A673 (cell line): ENCODE measurements at regions of chr9 and their contacts with region 1.

Region 1: GRCh38 chr9:38068866-38069629 is at the start of gene SHB:
- DNase-seq: peak; percentile 87
- H3K4me3 ChIP-seq: peak within 1 kb of the TSS; percentile 89
- H3K27ac ChIP-seq: peak within 1 kb of the TSS; percentile 91
- H3K4me1 ChIP-seq: peaks cover 20% of the 10 kb centered on the region
- H3K27me3 ChIP-seq: no peaks in the 10 kb centered on the region
- CTCF ChIP-seq: peak; percentile 50; the same call in 1 of the 2 replicates
- total RNA-seq, gene SHB: 14.7 and 20.7 TPM in 2 replicates

Region 2: DNA sequence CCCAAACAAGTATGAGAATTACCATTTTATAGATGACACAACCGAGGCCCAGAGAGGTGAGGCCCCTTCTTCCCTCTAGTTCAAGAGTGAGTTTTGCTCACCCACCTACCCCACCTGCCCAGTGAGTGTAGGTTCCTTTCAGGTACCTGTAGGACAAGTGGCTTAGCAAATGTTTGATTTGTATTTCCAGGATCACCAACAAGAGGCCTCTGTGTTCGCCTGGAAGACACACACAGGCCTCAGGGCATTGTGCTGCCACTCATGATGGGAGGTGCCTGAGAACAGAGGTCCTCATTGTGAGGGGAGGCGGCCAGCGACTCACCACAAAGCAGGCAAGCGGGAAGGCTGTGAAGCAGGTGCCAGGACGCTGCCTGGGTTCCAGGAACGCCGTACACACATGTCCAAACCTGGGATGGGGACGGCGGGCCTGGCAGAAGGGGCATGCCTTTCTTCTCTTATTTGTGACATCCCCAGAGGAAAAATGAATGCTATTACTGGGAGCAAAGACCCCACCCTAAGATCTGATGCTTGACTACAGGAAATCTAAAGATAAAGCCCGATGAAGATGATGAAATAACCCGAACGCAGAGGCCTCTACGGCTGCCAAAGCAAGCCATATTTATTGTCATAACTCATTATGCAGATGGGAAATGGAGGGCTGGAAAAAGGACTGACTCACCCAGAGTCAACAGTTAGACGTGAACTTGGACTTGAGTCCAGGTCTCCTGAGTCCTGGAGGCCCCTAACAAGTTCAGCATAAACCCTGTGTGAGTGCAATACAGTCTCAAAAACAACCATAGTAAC is 104.9 kb before region 1 on chr9:
- CTCF ChIA-PET with region 1: interaction called, 3 read pairs
- POLR2A ChIA-PET with region 1: no interaction called
- intact Hi-C with region 1: loop called (anchors 10 kb)
- DNase-seq: peak; percentile 54
- H3K4me3 ChIP-seq: no peak overlapping the region
- H3K27ac ChIP-seq: peak overlapping the region; percentile 74
- H3K4me1 ChIP-seq: peaks cover 13% of the 10 kb centered on the region
- H3K27me3 ChIP-seq: no peaks in the 10 kb centered on the region
- CTCF ChIP-seq: no peak

Region 3: GRCh38 chr9:38380872-38381534 is 312.0 kb after region 1 on chr9:
- CTCF ChIA-PET with region 1: no interaction called
- POLR2A ChIA-PET with region 1: no interaction called
- intact Hi-C with region 1: no loop called
- DNase-seq: no peak
- H3K4me3 ChIP-seq: no peak overlapping the region
- H3K27ac ChIP-seq: no peak overlapping the region
- H3K4me1 ChIP-seq: no peaks in the 10 kb centered on the region
- H3K27me3 ChIP-seq: no peaks in the 10 kb centered on the region
- CTCF ChIP-seq: no peak